MCF 10A (cell line): ENCODE measurements at regions of chr11 and their contacts with region 1.

Region 1: GRCh38 chr11:131064373-131064991 is 148.2 kb upstream of the SNX19 start:
- DNase-seq: peak; percentile 61
- H3K4me3 Mint-ChIP-seq: no peak overlapping the region
- H3K27ac Mint-ChIP-seq: no peak overlapping the region
- H3K4me1 Mint-ChIP-seq: peaks cover 10% of the 10 kb centered on the region
- H3K27me3 Mint-ChIP-seq: peaks cover 13% of the 10 kb centered on the region
- CTCF ChIP-seq: peak; percentile 92

Region 2: DNA sequence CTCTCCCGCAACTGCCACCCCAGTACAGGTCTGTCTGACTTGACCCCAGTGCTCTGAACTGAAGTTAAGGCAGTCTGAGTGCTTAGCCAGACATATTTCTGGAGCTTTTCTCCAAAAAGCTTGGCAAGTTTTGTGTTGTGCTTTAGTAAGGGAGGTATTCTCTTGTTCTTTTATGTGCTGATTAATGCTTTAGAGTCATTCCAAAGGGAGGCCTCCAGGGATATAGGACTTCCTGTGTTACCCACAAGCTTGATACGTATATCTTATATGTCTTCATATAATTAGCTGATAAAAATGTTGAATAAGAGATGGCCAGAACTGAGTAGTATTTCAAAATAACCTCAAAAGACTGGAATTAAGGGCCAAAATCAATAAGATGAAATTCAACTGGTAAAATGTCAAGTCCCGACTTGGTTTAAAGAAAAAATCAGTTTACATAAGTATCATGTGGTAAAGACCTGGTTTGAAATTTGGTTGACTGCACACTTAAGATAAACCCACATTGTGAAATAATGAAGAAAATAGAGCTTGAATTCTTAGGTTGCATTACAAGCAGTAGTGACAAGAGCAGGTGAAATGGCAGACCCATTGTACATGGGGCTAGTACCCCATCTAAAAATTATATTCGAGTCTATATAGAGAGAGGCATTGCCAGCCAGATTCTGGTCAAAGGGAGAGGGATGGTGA is 375.1 kb before region 1 on chr11:
- CTCF ChIA-PET with region 1: no interaction called
- POLR2A ChIA-PET with region 1: no interaction called
- intact Hi-C with region 1: no loop called
- DNase-seq: no peak
- H3K4me3 Mint-ChIP-seq: no peak overlapping the region
- H3K27ac Mint-ChIP-seq: no peak overlapping the region
- H3K4me1 Mint-ChIP-seq: no peaks in the 10 kb centered on the region
- H3K27me3 Mint-ChIP-seq: no peaks in the 10 kb centered on the region
- CTCF ChIP-seq: no peak

Region 3: DNA sequence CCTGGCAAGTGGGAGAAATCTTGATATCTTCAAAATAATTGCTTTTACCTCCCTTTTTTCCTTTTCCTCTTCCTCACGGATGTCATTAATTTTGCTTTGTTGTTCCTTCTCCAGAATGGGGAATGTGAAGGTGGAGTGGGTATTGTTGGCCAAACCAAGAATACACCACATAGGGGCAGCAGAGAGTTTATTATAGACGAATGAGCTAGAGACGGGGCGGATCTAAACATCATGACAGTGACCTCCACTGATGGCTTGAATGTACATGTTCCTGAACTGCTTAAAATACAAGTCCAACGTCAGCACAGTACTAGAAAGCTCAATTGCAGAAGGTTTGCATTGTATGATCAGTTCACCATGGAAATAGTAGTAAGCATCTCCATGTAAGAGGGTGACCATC is 25.9 kb before region 1 on chr11:
- CTCF ChIA-PET with region 1: interaction called, 39 read pairs
- POLR2A ChIA-PET with region 1: no interaction called
- intact Hi-C with region 1: no loop called
- DNase-seq: peak; percentile 56
- H3K4me3 Mint-ChIP-seq: no peak overlapping the region
- H3K27ac Mint-ChIP-seq: no peak overlapping the region
- H3K4me1 Mint-ChIP-seq: peaks cover 18% of the 10 kb centered on the region
- H3K27me3 Mint-ChIP-seq: no peaks in the 10 kb centered on the region
- CTCF ChIP-seq: peak; percentile 9

Region 4: GRCh38 chr11:131092469-131092868 is 28.0 kb after region 1 on chr11:
- CTCF ChIA-PET with region 1: interaction called, 16 read pairs
- POLR2A ChIA-PET with region 1: no interaction called
- intact Hi-C with region 1: no loop called
- DNase-seq: no peak
- H3K4me3 Mint-ChIP-seq: no peak overlapping the region
- H3K27ac Mint-ChIP-seq: no peak overlapping the region
- H3K4me1 Mint-ChIP-seq: no peaks in the 10 kb centered on the region
- H3K27me3 Mint-ChIP-seq: no peaks in the 10 kb centered on the region
- CTCF ChIP-seq: no peak

Region 5: DNA sequence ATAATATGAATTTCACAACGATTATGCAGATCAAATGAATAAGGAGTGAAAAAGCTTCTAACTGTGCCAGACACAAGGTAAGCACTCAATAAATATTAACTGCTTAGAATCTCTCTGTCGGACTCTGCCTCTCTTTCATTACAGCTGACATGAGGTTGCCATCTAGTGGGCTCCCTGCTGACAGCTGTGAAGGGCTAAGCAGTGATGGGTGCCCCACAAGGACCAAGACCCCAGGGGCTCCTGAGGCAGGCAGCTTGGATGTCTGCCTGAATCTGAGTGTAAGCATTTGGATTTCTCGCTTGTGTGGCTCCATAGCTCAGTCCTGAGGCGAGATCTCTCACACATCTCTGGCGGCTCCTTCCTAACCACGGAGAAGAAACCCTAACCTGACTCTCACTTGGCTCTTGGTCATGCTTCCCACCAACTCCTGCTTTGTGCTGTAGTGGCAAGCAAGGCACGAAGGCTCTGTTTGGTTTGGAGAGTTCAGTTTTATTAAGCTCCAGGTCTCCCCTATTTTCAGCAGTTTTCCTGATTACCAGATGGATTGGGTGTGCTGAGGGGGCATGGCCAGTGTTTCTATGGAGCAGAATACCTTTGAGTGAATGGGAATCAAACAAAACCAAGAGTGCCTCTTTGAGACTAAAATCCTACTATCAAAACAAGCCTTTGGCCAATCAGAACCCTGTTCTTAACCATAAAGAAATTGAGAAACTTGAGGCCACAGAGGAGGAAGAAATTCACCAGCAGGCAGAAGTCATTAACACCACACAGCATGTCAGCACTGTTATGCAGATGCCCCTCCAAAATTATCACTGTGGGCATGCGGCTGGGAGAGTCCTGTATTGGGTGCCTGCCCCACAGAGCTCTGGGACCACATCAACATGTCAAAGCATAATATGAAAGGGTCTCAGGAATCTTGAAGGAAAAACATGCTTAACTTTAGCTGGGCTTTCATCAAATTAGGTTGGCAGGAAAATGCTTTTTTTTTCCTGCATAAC is 153.1 kb after region 1 on chr11:
- CTCF ChIA-PET with region 1: interaction called, 22 read pairs
- POLR2A ChIA-PET with region 1: no interaction called
- intact Hi-C with region 1: no loop called
- DNase-seq: peak; percentile 5
- H3K4me3 Mint-ChIP-seq: no peak overlapping the region
- H3K27ac Mint-ChIP-seq: no peak overlapping the region
- H3K4me1 Mint-ChIP-seq: no peaks in the 10 kb centered on the region
- H3K27me3 Mint-ChIP-seq: no peaks in the 10 kb centered on the region
- CTCF ChIP-seq: no peak

Region 6: DNA sequence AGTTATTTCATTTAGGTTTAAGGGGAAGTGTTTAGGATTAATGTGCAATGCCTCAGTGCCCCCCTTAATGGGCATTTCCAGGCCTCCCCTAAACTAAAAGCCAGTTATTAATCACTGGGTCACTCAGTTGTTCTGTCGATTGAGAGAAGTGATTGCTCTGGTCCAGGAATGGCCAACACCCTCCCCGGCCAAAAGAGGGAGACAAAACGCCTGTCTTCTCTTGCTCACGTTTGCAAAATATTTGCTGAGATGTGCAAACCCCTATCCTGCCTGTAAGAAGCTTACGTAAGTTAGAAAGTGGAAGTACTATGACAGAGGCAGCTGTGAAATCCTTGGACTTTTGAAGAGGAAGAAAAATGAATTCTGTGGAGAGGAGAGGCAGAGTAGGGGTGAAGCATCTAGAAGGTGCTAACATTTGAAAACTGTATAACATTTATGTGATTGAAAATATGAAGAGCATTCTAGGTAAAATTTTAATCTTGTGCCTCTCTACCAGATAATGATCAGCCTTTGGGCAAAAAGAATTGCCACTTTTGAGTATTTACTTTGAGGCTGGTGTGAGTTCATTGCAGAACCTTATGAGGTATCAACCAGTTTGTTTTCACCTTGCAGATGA is 343.7 kb after region 1 on chr11:
- CTCF ChIA-PET with region 1: no interaction called
- POLR2A ChIA-PET with region 1: no interaction called
- intact Hi-C with region 1: loop called (anchors 5 kb)
- DNase-seq: no peak
- H3K4me3 Mint-ChIP-seq: no peak overlapping the region
- H3K27ac Mint-ChIP-seq: no peak overlapping the region
- H3K4me1 Mint-ChIP-seq: no peaks in the 10 kb centered on the region
- H3K27me3 Mint-ChIP-seq: no peaks in the 10 kb centered on the region
- CTCF ChIP-seq: peak; percentile 28

Region 7: GRCh38 chr11:131674051-131674755 is 609.7 kb after region 1 on chr11:
- CTCF ChIA-PET with region 1: interaction called, 101 read pairs
- POLR2A ChIA-PET with region 1: interaction called, 3 read pairs
- intact Hi-C with region 1: loop called (anchors 2 kb)
- DNase-seq: peak; percentile 20
- H3K4me3 Mint-ChIP-seq: no peak overlapping the region
- H3K27ac Mint-ChIP-seq: no peak overlapping the region
- H3K4me1 Mint-ChIP-seq: no peaks in the 10 kb centered on the region
- H3K27me3 Mint-ChIP-seq: no peaks in the 10 kb centered on the region
- CTCF ChIP-seq: peak; percentile 70

Region 8: DNA sequence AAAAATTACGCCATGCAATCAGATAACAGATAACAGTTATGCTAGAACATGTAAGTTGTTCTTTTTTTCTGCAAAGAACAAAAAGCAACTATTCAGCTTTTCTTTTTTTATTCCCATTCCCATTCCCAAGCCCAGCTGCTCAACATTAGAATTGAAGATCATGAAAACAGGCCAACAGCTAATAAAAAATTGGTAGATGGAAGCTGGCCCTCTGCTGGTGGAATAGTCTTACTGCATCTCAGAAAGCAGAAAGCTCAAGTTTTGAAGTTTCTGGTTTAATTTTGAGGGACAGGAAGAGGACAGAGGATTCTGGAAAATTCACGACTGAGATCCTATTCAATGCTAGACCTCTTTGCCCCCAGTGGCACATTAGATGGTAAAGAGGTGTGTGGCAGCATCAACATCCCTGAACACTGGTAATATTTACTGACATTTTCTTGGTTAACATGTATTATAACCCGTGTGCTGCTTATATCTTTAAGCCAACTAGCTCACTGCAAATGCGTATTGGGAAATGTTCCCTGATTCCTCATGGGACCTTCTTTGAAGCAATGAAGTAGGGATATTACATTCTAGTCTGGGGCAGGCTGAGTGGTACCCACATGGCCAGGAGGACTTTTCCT is 1876.7 kb after region 1 on chr11:
- CTCF ChIA-PET with region 1: interaction called, 29 read pairs
- POLR2A ChIA-PET with region 1: no interaction called
- intact Hi-C with region 1: loop called (anchors 2 kb)
- DNase-seq: peak; percentile 20
- H3K4me3 Mint-ChIP-seq: no peak overlapping the region
- H3K27ac Mint-ChIP-seq: no peak overlapping the region
- H3K4me1 Mint-ChIP-seq: no peaks in the 10 kb centered on the region
- H3K27me3 Mint-ChIP-seq: no peaks in the 10 kb centered on the region
- CTCF ChIP-seq: peak; percentile 53